Naive thymus-derived CD4-positive, alpha-beta T cell (primary cell): ENCODE measurements at regions of chr4 and their contacts with region 1.

Region 1: GRCh38 chr4:42865572-42866189 is 26.8 kb upstream of the GRXCR1 start:
- DNase-seq: peak in 8 of 9 donors; percentile 14 to 58 (median 46)
- ATAC-seq: peak; percentile 51
- H3K4me3 ChIP-seq: no peak overlapping the region
- H3K4me3 Mint-ChIP-seq: no peak overlapping the region
- H3K27ac ChIP-seq: no peak overlapping the region
- H3K27ac Mint-ChIP-seq: no peak overlapping the region
- H3K4me1 ChIP-seq: no peaks in the 10 kb centered on the region
- H3K4me1 Mint-ChIP-seq: no peaks in the 10 kb centered on the region
- H3K27me3 ChIP-seq: no peaks in the 10 kb centered on the region
- H3K27me3 Mint-ChIP-seq: peaks cover 19 to 37% (median 28%) of the 10 kb centered on the region in 5 donors

Region 2: DNA sequence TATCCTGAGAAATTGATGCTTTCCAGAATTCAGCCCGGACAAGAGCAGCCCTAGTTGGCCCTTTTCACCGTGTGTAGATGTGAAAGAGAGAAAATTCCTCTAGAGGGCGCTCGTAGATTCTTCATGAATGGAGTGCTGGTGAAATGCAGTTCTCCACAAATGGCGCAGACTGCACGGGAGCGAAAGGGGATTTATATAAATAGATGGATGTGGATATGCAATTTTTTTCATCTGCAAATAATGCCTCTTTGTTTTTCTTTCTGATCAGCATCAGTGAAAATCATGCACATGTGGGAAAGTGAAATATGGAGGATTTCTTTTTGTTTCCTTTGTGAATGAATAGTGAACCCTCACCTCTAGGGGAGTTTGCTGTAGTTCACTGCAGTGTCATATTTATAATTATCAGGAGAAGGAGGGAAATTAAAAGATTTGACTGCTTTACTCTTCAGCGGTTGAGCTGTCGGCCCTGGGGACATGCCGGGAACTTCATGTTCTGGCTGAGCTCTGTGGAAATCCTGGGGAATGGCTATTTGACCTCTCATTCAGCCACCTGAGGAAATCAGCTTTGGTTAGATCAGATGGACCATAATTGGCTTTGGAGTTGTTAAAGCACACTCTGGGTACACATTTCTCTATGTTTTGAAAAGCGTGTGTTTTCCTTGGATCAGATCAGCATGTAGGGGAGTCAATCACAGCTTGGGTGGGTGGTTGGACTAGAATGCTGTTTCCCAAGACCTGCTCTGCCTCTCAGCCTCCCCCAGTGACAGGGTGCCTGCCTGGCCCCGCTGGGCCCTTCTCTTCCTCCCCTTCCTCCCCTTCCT is 583.4 kb before region 1 on chr4:
- CTCF ChIA-PET with region 1: no interaction called
- POLR2A ChIA-PET with region 1: no interaction called
- intact Hi-C with region 1: loop called in 1 of 2 experiments (anchors 2 kb)
- DNase-seq: peak in 5 of 9 donors; percentile 9 to 30 (median 12)
- ATAC-seq: peak; percentile 65
- H3K4me3 ChIP-seq: no peak overlapping the region
- H3K4me3 Mint-ChIP-seq: peak overlapping the region in 2 of 10 donors; percentile 18 to 39
- H3K27ac ChIP-seq: no peak overlapping the region
- H3K27ac Mint-ChIP-seq: no peak overlapping the region
- H3K4me1 ChIP-seq: no peaks in the 10 kb centered on the region
- H3K4me1 Mint-ChIP-seq: peaks cover 0 to 14% (median 7%) of the 10 kb centered on the region in 7 donors
- H3K27me3 ChIP-seq: no peaks in the 10 kb centered on the region
- H3K27me3 Mint-ChIP-seq: peaks cover 6 to 29% (median 22%) of the 10 kb centered on the region in 5 donors

Region 3: GRCh38 chr4:42371306-42372252 is 494.1 kb before region 1 on chr4:
- CTCF ChIA-PET with region 1: no interaction called
- POLR2A ChIA-PET with region 1: no interaction called
- intact Hi-C with region 1: loop called in 1 of 2 experiments (anchors 1 kb)
- DNase-seq: peak in 2 of 9 donors; percentile 3 to 4
- ATAC-seq: no peak
- H3K4me3 ChIP-seq: no peak overlapping the region
- H3K4me3 Mint-ChIP-seq: no peak overlapping the region
- H3K27ac ChIP-seq: no peak overlapping the region
- H3K27ac Mint-ChIP-seq: no peak overlapping the region
- H3K4me1 ChIP-seq: no peaks in the 10 kb centered on the region
- H3K4me1 Mint-ChIP-seq: no peaks in the 10 kb centered on the region
- H3K27me3 ChIP-seq: no peaks in the 10 kb centered on the region
- H3K27me3 Mint-ChIP-seq: peaks cover 7 to 30% (median 22%) of the 10 kb centered on the region in 5 donors

Region 4: GRCh38 chr4:42750091-42750490 is 115.6 kb before region 1 on chr4:
- CTCF ChIA-PET with region 1: no interaction called
- POLR2A ChIA-PET with region 1: no interaction called
- intact Hi-C with region 1: loop called in 1 of 2 experiments (anchors 1 kb)
- DNase-seq: peak in 7 of 9 donors; percentile 15 to 59 (median 39)
- ATAC-seq: peak; percentile 88
- H3K4me3 ChIP-seq: no peak overlapping the region
- H3K4me3 Mint-ChIP-seq: no peak overlapping the region
- H3K27ac ChIP-seq: no peak overlapping the region
- H3K27ac Mint-ChIP-seq: no peak overlapping the region
- H3K4me1 ChIP-seq: no peaks in the 10 kb centered on the region
- H3K4me1 Mint-ChIP-seq: peaks cover 0 to 4% (median 0%) of the 10 kb centered on the region in 7 donors
- H3K27me3 ChIP-seq: no peaks in the 10 kb centered on the region
- H3K27me3 Mint-ChIP-seq: no peaks in the 10 kb centered on the region

Region 5: DNA sequence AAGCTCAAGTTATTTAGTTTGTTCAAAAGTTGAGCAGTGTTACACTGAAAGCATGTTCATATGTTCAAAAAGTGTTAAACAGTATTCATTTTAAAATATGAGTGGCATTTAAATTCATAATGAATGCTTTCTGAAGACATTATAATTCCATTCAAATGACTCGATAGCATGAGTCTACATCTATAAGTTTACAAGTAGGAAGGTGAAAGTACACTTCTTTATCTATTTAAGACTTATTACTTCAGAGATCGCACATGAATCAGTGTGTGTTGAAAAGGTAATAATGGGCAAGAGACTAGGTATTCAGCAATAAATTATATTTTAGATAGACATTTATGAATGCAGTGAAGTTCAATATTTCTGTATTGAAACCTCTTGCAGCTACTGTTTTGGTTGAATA is 482.9 kb after region 1 on chr4:
- CTCF ChIA-PET with region 1: no interaction called
- POLR2A ChIA-PET with region 1: no interaction called
- intact Hi-C with region 1: no loop called
- DNase-seq: no peak
- ATAC-seq: no peak
- H3K4me3 ChIP-seq: no peak overlapping the region
- H3K4me3 Mint-ChIP-seq: no peak overlapping the region
- H3K27ac ChIP-seq: no peak overlapping the region
- H3K27ac Mint-ChIP-seq: no peak overlapping the region
- H3K4me1 ChIP-seq: no peaks in the 10 kb centered on the region
- H3K4me1 Mint-ChIP-seq: no peaks in the 10 kb centered on the region
- H3K27me3 ChIP-seq: no peaks in the 10 kb centered on the region
- H3K27me3 Mint-ChIP-seq: no peaks in the 10 kb centered on the region